Common myeloid progenitor, CD34-positive (primary cell): ENCODE measurements at regions of chr5 and their contacts with region 1.

Region 1: DNA sequence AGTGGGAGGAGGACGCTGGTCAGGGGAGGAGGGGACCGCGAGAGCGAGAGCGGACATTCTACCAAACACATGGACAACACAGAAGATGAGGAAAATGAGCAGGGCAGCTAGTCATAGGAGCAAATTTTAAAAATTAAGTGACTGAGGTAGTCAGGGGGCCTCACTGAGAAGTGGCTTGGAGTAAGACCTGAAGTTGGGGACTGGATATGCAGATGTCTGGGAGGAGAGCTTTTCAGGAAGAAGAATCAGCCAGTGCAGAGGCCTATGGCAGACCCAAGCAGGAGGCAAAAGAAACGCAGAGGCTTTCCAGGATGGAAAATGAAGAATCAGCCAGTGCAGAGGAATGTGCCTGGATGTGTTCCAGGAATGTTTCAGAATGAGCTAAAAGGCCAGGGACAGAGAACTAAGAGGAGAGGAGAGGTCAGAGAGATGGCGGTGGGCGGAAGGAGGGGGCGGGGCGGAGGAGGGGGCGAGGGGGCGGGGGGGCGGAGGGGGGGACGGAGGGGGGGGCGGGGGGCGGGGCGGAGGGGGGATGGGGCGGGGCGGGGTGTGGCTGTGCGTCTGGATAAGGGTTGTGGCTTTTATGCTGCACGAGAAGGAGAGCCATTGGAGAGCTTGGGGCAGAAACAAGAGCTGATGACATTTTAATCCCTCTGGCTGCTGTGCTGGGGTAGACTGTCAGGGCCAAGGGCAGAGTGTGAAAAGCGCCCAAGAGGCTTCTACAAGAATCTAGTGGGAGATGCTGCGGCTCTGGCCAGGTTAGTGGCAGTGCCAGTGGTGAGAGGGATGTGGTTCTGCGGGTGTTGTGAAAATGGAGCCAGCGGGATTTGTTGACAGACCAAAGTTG is 129.6 kb downstream of the KCNIP1 start:
- DNase-seq: peak; percentile 74 to 88 (median 85)
- H3K4me3 ChIP-seq: peak overlapping the region; percentile 22 to 72 (median 68)
- H3K27ac ChIP-seq: peak overlapping the region in 1 of 2 experiments; percentile 59
- H3K4me1 ChIP-seq: peaks cover 0 to 17% (median 15%) of the 10 kb centered on the region in 4 experiments
- H3K27me3 ChIP-seq: no peaks in the 10 kb centered on the region

Region 2: GRCh38 chr5:170434966-170435605 is 198.4 kb before region 1 on chr5:
- CTCF ChIA-PET with region 1: interaction called, 112 read pairs
- POLR2A ChIA-PET with region 1: no interaction called
- DNase-seq: peak; percentile 54 to 76 (median 66)
- H3K4me3 ChIP-seq: no peak overlapping the region
- H3K27ac ChIP-seq: no peak overlapping the region
- H3K4me1 ChIP-seq: peaks cover 0 to 3% (median 0%) of the 10 kb centered on the region in 4 experiments
- H3K27me3 ChIP-seq: peaks cover 0 to 6% (median 0%) of the 10 kb centered on the region in 5 experiments

Region 3: GRCh38 chr5:170597109-170597751 is 36.2 kb before region 1 on chr5:
- CTCF ChIA-PET with region 1: interaction called, 37 read pairs
- POLR2A ChIA-PET with region 1: no interaction called
- DNase-seq: no peak
- H3K4me3 ChIP-seq: no peak overlapping the region
- H3K27ac ChIP-seq: no peak overlapping the region
- H3K4me1 ChIP-seq: peaks cover 0 to 21% (median 8%) of the 10 kb centered on the region in 4 experiments
- H3K27me3 ChIP-seq: peaks cover 0 to 15% (median 0%) of the 10 kb centered on the region in 5 experiments

Region 4: GRCh38 chr5:170603578-170604565 is 29.6 kb before region 1 on chr5:
- CTCF ChIA-PET with region 1: interaction called, 37 read pairs
- POLR2A ChIA-PET with region 1: no interaction called
- DNase-seq: peak; percentile 68 to 80 (median 69)
- H3K4me3 ChIP-seq: no peak overlapping the region
- H3K27ac ChIP-seq: no peak overlapping the region
- H3K4me1 ChIP-seq: peaks cover 0 to 8% (median 3%) of the 10 kb centered on the region in 4 experiments
- H3K27me3 ChIP-seq: peaks cover 0 to 18% (median 0%) of the 10 kb centered on the region in 5 experiments

Region 5: DNA sequence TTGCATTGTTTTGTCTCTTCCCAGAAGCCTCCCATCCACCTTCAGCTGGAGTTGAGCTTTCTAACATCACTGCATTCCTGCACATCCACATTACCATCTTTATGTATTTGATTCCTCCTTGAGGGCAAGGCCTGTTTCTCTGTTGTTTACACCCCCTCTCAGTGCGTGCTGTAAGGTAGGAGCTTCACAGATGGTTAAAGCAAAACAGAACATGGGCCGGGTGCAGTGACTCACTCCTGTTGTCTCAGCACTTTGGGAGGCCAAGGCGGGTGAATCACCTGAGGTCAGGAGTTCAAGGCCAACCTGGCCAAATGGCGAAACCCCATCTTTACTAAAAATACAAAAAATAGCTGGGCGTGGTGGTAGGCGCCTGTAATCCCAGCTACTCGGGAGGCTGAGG is 18.7 kb before region 1 on chr5:
- CTCF ChIA-PET with region 1: interaction called, 22 read pairs
- POLR2A ChIA-PET with region 1: no interaction called
- DNase-seq: no peak
- H3K4me3 ChIP-seq: no peak overlapping the region
- H3K27ac ChIP-seq: no peak overlapping the region
- H3K4me1 ChIP-seq: peaks cover 0 to 7% (median 1%) of the 10 kb centered on the region in 4 experiments
- H3K27me3 ChIP-seq: peaks cover 0 to 6% (median 0%) of the 10 kb centered on the region in 5 experiments

Region 6: GRCh38 chr5:170791325-170791954 is 158.0 kb after region 1 on chr5:
- CTCF ChIA-PET with region 1: interaction called, 78 read pairs
- POLR2A ChIA-PET with region 1: no interaction called
- DNase-seq: peak; percentile 49 to 74 (median 59)
- H3K4me3 ChIP-seq: no peak overlapping the region
- H3K27ac ChIP-seq: no peak overlapping the region
- H3K4me1 ChIP-seq: no peaks in the 10 kb centered on the region
- H3K27me3 ChIP-seq: peaks cover 0 to 3% (median 0%) of the 10 kb centered on the region in 5 experiments